ENCODE measurements at regions of chr20 and their contacts with region 1.

Region 1: DNA sequence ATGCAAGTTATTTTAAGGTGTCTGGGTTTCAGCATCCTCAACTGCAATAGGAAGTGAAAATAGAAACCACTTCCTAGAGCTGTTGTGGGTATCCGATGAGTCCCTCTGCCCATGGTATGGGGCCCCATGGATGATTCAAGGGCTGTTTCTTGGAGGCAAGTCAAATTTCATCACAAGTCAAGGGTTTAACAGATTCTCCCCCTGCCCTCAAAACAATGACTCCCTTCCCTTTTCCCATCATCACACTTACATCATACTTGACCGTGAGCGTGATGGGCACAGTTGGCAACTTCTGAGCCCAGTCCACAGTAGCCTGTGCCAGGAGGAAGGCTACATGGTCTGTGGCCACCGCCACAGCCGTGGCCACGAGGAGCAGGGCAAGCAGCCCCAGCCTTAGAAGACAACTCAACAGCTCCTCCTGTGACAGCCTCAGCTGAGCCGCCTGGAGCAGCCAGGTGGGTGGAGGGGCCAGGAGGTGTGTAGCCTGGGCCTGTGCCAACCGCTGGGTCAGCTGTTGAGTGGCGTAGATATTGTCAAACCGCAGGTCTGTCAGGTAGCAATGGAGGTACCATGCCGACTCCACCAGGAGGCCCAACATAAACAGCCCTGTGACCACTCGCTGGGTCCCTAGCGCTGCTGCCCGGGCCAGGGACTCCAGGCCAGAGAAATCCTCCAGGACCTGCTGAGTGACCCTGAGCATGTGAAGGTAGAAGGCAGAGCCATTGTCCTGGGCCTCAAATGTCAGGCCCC is 5.2 kb downstream of the OCSTAMP start:
- DNase-seq: peak; percentile 80
- H3K4me3 Mint-ChIP-seq: peak overlapping the region; percentile 31
- H3K27ac Mint-ChIP-seq: peak overlapping the region; percentile 88
- H3K4me1 Mint-ChIP-seq: peaks cover 15% of the 10 kb centered on the region
- H3K27me3 Mint-ChIP-seq: peaks cover 4% of the 10 kb centered on the region

Region 2: GRCh38 chr20:46562373-46563169 is 17.3 kb after region 1 on chr20:
- CTCF ChIA-PET with region 1: interaction called, 24 read pairs
- POLR2A ChIA-PET with region 1: interaction called, 5 read pairs
- intact Hi-C with region 1: loop called (anchors 1 kb)
- DNase-seq: peak; percentile 75
- H3K4me3 Mint-ChIP-seq: no peak overlapping the region
- H3K27ac Mint-ChIP-seq: no peak overlapping the region
- H3K4me1 Mint-ChIP-seq: peaks cover 21% of the 10 kb centered on the region
- H3K27me3 Mint-ChIP-seq: peaks cover 6% of the 10 kb centered on the region

Region 3: DNA sequence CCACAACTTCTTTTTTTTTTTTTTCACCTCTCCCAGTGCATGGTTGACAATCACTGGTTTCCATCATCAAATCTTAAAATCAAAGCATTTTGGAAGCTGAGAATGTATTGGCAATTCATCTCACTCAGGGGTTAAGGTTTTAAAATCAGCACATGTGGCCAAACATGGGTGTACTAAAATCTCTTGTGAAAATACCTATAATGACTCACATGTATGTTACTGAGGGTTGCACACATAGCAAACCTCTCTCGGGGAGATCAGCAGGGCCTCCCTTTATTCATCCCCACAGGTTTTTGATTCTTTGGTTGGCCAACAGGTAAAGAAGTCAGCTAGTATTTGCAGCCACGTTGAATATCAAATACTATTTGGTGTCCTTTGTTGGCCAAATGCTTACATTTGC is 49.5 kb after region 1 on chr20:
- CTCF ChIA-PET with region 1: no interaction called
- POLR2A ChIA-PET with region 1: no interaction called
- intact Hi-C with region 1: no loop called
- DNase-seq: no peak
- H3K4me3 Mint-ChIP-seq: no peak overlapping the region
- H3K27ac Mint-ChIP-seq: no peak overlapping the region
- H3K4me1 Mint-ChIP-seq: no peaks in the 10 kb centered on the region
- H3K27me3 Mint-ChIP-seq: peaks cover 13% of the 10 kb centered on the region

Region 4: DNA sequence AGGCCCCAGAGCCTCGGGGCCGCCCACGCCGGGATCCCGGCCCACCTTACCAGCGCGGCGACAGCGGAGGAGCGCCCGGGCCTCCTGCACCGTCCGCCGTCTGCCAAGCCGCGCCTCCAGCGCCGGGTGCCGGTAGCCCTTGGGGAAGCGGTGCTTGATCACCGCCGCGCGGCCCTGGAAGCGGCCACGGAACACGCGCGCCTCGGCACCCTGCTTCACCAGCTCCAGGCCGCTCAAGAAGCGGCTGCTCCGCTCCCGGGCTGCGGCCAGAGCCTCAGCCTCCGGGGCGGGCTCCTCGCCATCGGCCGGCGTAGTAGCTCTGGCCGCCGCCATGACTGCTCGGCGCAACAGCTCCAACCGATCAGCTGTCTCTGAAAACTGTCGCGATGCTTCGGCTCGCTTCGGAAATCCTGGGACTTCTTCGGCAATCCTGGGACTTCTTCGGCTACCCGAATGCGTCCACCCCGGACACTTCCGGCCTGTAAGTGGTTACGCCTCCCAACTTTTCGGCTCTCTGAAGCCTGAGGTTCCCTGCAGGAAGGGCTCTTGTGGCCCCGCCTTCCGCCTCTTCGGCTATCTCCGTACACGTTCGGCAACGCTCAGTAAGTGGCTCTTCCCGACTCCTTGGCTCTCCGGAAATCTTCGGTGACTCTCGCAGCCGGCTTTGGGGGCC is 144.0 kb after region 1 on chr20 and contains the start of gene TP53RK:
- CTCF ChIA-PET with region 1: interaction called, 10 read pairs
- POLR2A ChIA-PET with region 1: interaction called, 7 read pairs
- intact Hi-C with region 1: loop called (anchors 2 kb)
- DNase-seq: peak; percentile 98
- H3K4me3 Mint-ChIP-seq: peak within 1 kb of the TSS; percentile 96
- H3K27ac Mint-ChIP-seq: peak within 1 kb of the TSS; percentile 97
- H3K4me1 Mint-ChIP-seq: peaks cover 36% of the 10 kb centered on the region
- H3K27me3 Mint-ChIP-seq: no peaks in the 10 kb centered on the region
- total RNA-seq, gene TP53RK: 12.1 to 12.3 TPM

Measured in activated CD4-positive, alpha-beta memory T cell treated with anti-CD3 and anti-CD28 coated beads for 36 hours (primary cell).